Endothelial cell of umbilical vein (primary cell): ENCODE measurements at regions of chr2 and their contacts with region 1.

Region 1: DNA sequence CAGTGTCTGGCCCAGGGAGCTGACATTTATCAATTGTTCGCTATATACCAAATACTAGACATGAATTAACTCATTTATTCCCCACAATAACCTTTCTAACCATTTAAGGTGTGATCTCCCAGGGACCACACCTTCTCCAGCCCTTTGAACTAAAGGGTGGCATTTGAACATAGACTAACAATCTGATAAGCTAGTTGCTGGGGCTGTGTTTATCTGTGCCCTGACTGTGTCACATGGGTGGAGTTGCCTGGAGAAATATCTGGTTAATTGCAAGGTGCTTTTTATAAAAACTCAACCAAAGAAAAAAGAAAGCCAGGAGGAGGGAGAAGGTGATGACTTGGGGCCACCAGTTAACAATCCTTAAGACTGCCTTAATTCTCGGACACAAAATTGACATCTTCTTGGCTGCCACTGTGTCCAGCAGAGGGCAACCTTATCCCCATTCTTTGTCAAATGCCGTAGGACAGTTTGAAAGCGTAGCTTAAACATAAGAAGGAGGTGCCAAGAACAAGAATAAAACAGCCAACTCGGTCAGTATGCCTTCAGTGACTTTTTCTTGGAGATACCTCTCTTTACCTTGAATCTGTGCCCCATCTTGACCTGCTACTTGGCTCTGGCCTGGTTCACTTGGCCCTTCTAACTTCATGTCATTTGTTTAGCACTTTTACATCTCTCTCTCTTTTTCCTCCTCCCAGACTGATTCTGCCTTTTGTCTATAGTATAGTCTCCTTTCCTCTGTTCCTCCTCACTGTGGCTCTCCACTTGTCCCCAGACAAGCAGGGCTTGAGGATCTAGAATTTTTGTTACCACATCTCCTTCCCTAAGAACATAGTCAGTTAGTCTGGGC is 183.4 kb downstream of the MYO3B start:
- DNase-seq: peak; percentile 75
- H3K4me3 ChIP-seq: no peak overlapping the region
- H3K27ac ChIP-seq: no peak overlapping the region
- H3K4me1 ChIP-seq: no peaks in the 10 kb centered on the region
- H3K27me3 ChIP-seq: peaks cover 41 to 63% of the 10 kb centered on the region in 2 experiments
- CTCF ChIP-seq: peak; percentile 71 to 72
- POLR2A ChIP-seq: no peak

Region 2: GRCh38 chr2:170339750-170340692 is 21.3 kb before region 1 on chr2:
- CTCF ChIA-PET with region 1: interaction called, 22 read pairs
- POLR2A ChIA-PET with region 1: no interaction called
- dilution Hi-C with region 1: no loop called
- intact Hi-C with region 1: no loop called
- DNase-seq: no peak
- H3K4me3 ChIP-seq: no peak overlapping the region
- H3K27ac ChIP-seq: no peak overlapping the region
- H3K4me1 ChIP-seq: no peaks in the 10 kb centered on the region
- H3K27me3 ChIP-seq: peaks cover 12 to 15% of the 10 kb centered on the region in 2 experiments
- CTCF ChIP-seq: no peak
- POLR2A ChIP-seq: no peak

Region 3: DNA sequence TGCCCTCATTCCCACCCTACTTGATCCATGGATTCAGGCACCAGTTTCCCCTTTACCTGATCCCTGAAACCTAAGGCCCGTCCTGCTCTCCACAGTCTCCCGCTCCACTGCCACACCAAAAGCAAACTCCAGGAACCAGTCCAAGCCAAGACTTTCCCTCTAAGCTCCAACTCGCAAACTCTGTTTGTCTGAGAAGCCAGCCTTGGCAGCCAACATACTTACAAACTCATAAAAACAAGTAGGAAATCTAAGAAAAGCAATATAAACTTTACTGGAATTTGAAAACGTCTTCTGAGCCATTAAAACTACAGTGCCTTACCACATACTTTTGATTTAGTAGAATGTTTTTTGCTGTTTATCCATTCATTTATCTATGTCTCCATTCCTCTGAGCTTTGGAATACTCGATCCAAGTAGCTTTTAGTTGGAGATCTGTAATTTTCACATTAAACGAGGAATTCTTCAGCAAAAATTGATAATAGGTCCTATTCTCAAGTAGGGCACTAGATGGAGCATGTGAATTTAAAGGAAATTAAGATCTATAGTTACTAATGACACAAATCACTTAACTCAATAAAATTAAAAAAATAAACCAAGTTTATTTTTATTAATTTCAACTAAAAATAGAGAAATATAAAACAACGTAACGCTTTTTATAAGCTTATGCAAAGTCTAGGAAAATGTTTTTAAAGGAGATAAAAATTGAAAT is 16.3 kb after region 1 on chr2:
- CTCF ChIA-PET with region 1: interaction called, 12 read pairs
- POLR2A ChIA-PET with region 1: no interaction called
- dilution Hi-C with region 1: no loop called
- intact Hi-C with region 1: no loop called
- DNase-seq: no peak
- H3K4me3 ChIP-seq: no peak overlapping the region
- H3K27ac ChIP-seq: no peak overlapping the region
- H3K4me1 ChIP-seq: no peaks in the 10 kb centered on the region
- H3K27me3 ChIP-seq: peaks cover 15 to 30% of the 10 kb centered on the region in 2 experiments
- CTCF ChIP-seq: no peak
- POLR2A ChIP-seq: no peak